Mammary epithelial cell (primary cell): ENCODE measurements at regions of chr5 and their contacts with region 1.

Region 1: GRCh38 chr5:142280066-142280911 is 44.5 kb downstream of the SPRY4 start:
- DNase-seq: no peak
- H3K4me3 ChIP-seq: no peak overlapping the region
- H3K27ac ChIP-seq: no peak overlapping the region
- H3K4me1 ChIP-seq: peaks cover 15% of the 10 kb centered on the region
- H3K27me3 ChIP-seq: no peaks in the 10 kb centered on the region
- CTCF ChIP-seq: no peak

Region 2: DNA sequence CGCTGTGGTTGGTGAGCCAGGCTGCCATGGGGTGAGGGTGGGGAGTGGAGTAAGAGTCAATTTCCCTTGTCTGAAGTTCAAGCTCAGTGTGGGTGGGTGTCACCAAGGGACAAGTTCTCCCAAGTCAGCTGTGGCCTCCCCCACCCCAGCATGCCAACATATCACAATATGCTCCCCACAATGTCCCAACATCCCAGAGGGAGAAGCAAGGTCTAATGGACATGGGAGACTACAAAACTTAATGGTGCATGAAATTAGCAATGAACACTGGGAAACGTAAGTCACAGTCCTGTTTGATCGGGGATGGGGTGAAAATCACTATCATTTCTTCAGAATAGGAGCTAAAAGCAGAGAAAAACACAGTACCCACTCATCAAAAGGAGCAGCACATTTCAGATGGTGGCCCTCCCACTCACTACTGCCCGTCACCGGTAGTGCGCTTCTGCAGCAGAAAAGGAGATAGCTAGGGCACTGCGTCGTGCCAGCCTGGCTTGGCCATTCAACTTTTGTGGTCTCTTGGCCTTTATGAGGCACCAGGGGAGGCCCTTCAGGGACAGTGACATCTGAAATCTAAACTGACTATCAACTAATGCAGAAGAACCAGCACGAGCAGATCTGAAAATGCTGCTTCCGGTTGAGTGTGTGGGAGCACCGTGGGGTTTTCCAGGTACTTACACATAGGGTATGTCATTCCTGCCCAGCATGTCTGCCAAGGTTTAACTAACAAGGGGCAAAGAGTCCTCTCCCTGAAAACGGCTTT is 192.2 kb before region 1 on chr5:
- CTCF ChIA-PET with region 1: no interaction called
- dilution Hi-C with region 1: no loop called
- in situ Hi-C with region 1: no loop called
- intact Hi-C with region 1: no loop called
- DNase-seq: no peak
- H3K4me3 ChIP-seq: no peak overlapping the region
- H3K27ac ChIP-seq: no peak overlapping the region
- H3K4me1 ChIP-seq: no peaks in the 10 kb centered on the region
- H3K27me3 ChIP-seq: no peaks in the 10 kb centered on the region
- CTCF ChIP-seq: no peak

Region 3: DNA sequence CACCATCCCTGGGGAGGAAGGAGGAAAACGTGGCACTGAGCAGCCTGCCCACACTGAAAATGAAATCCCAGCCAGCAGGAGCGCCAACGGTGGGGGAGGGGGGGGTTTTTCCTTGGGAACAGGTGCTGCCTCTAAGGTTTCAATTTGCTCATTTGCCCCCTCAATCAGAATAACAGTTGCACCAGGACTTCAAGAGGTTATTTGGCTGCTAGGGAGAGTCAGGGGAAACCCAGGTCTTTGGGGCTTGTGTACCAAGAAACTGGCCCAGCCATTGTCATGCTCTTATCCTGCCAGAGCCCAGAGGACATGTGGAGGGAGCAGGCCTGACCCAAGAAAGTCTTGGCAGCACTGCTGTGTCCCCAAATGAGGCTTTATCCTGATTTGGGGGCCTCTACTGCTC is 105.2 kb before region 1 on chr5:
- CTCF ChIA-PET with region 1: no interaction called
- dilution Hi-C with region 1: no loop called
- in situ Hi-C with region 1: no loop called
- intact Hi-C with region 1: loop called (anchors 10 kb)
- DNase-seq: no peak
- H3K4me3 ChIP-seq: no peak overlapping the region
- H3K27ac ChIP-seq: no peak overlapping the region
- H3K4me1 ChIP-seq: peaks cover 17% of the 10 kb centered on the region
- H3K27me3 ChIP-seq: no peaks in the 10 kb centered on the region
- CTCF ChIP-seq: no peak